Activated naive CD8-positive, alpha-beta T cell treated with anti-CD3 and anti-CD28 coated beads, Interleukin-2, amount 10 ng/mL, durations not matched to agents 7 days and 5 days (primary cell): ENCODE measurements at regions of chr20 and their contacts with region 1.

Region 1: GRCh38 chr20:53594068-53595017 is 704 bp upstream of the ZNF217 start:
- DNase-seq: peak; percentile 100
- ATAC-seq: peak; percentile 79
- H3K4me3 Mint-ChIP-seq: peak overlapping the region; percentile 97
- H3K27ac Mint-ChIP-seq: peak overlapping the region; percentile 95
- H3K4me1 Mint-ChIP-seq: peaks cover 45% of the 10 kb centered on the region
- H3K27me3 Mint-ChIP-seq: no peaks in the 10 kb centered on the region

Region 2: DNA sequence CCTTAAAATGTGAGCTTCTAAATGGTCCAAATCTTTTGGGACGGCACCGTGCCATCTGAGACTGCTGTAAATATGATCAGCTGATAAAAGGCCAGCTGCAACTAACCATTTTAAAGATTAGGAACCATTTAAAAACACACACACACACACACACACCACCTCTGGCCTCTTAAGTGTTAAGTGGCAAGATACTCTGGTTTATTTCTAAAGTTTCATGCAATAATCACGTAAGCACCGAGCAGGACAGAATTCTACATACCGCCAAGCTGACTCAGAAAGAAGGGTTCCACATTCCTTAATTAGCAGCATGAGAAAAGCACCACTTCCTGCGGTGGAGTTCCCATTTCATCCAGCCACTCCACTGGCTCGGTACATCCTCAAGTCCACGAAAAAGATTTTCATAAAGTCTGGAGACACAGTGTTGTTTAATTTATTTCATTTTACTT is 17.1 kb after region 1 on chr20:
- POLR2A ChIA-PET with region 1: interaction called, 58 read pairs
- DNase-seq: no peak
- ATAC-seq: no peak
- H3K4me3 Mint-ChIP-seq: no peak overlapping the region
- H3K27ac Mint-ChIP-seq: no peak overlapping the region
- H3K4me1 Mint-ChIP-seq: peaks cover 30% of the 10 kb centered on the region
- H3K27me3 Mint-ChIP-seq: no peaks in the 10 kb centered on the region

Region 3: DNA sequence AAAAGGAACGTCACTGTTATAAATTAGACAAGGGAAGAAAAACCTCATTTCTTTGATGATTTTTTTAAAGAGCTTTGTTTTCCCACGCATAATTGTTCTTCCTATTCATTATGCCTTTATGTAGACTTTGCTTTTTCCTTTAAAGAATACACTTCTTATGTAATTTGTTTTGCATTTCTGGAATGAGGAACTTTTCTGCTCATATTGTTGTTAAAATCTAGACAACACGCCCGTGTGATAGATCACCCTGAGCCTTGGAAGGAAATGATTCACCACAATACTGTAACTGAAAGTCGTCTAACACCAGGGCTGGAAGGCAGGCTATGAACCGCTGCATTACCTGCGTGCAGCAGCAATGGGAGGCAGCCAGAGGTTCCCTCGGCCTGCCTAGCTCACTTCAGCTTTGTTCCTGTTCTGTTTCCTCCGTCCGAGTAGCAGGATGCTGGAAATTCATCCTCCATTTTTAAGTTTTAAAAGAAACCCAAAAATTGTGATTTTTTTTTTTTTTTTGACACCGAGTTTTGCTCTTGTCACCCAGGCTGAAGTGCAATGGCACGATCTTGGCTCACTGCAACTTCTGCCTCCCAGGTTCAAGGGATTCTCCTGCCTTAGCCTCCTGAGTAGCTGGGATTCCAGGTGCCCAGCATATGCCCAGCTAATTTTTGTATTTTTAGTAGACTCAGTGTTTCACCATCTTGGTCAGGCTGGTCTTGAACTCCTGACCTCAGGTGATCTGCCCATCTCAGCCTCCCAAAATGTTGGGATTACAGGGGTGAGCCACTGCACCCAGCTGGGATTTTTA is 48.9 kb after region 1 on chr20:
- POLR2A ChIA-PET with region 1: interaction called, 31 read pairs
- DNase-seq: peak; percentile 60
- ATAC-seq: peak; percentile 96
- H3K4me3 Mint-ChIP-seq: peak overlapping the region; percentile 75
- H3K27ac Mint-ChIP-seq: peak overlapping the region; percentile 96
- H3K4me1 Mint-ChIP-seq: peaks cover 43% of the 10 kb centered on the region
- H3K27me3 Mint-ChIP-seq: no peaks in the 10 kb centered on the region

Region 4: DNA sequence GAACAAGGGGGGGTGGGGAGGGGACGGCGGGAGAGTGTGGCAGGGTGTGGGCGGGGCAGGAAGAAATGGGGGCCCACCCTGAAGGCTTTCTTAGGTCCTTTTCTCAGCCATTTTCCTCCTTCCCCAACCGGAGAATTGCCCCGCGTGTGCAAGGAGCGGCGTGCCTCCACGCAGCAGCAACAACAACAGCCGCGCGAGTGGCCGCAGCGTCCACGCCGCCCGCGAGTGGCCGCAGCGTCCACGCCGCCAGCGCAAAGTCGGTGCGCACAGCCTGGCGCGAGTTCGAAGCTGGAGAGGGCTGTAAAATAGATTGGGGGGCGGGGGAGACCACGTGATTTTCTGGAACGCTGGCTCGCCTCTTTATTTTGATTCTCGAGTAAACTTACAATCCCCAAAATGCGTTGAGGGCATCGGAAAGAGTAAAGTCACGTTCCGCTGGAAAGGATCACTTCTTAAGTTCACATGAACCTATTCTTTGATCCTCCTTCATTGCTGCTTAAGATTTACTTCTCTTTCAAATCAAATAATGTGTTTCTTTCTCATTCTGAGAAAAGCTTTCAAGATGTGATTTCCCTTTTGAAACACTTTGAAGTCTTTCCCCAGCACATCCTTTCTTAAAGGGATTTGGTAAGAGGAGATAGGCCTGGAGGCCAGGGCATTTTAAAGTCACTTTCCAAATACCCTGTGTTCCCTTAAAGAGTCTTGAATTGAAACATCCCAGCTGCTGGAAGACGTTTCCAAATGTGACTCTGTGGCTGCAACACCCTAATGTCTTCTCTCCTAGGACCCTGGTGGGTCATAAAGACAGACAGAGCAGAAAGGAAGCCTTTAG is 66.0 kb after region 1 on chr20:
- POLR2A ChIA-PET with region 1: interaction called, 11 read pairs
- DNase-seq: peak; percentile 69
- ATAC-seq: peak; percentile 51
- H3K4me3 Mint-ChIP-seq: peak overlapping the region; percentile 88
- H3K27ac Mint-ChIP-seq: peak overlapping the region; percentile 96
- H3K4me1 Mint-ChIP-seq: peaks cover 57% of the 10 kb centered on the region
- H3K27me3 Mint-ChIP-seq: no peaks in the 10 kb centered on the region

Region 5: GRCh38 chr20:53708129-53708968 is 114.0 kb after region 1 on chr20:
- POLR2A ChIA-PET with region 1: interaction called, 24 read pairs
- DNase-seq: no peak
- ATAC-seq: peak; percentile 60
- H3K4me3 Mint-ChIP-seq: peak overlapping the region; percentile 82
- H3K27ac Mint-ChIP-seq: peak overlapping the region; percentile 94
- H3K4me1 Mint-ChIP-seq: peaks cover 50% of the 10 kb centered on the region
- H3K27me3 Mint-ChIP-seq: no peaks in the 10 kb centered on the region

Region 6: DNA sequence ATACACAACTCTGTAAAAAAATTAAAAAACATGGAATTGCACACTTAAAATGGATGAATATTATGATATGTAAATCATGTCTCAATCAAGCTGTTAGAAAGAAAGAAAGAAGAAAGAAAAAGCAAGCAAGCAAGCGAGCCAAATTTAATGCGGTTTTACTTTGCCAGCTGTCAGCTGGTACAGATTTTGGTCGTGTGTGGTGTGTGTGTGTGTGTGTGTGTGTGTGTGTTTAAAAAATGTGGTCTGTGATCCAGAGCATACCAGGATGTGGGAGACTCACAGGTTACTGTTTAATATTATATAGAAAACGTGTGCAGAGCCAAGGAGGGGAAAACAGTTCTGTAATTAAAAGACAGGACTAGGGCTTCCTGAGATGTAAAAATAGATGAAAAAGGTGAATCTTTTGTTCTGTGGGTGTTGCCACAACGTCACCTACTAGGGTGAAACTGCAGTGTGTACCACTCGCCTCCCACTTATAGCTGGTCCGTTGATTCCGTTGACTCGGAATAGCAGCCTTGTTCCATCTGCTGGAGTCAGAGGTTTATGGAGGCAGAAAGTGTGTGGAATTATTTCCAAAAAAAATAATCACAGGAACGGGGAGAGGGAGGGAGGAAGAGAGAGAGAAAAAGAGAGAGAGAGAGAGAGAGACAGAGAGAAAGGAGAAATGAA is 278.4 kb after region 1 on chr20:
- POLR2A ChIA-PET with region 1: interaction called, 14 read pairs
- DNase-seq: no peak
- ATAC-seq: peak; percentile 54
- H3K4me3 Mint-ChIP-seq: peak overlapping the region; percentile 88
- H3K27ac Mint-ChIP-seq: peak overlapping the region; percentile 96
- H3K4me1 Mint-ChIP-seq: peaks cover 47% of the 10 kb centered on the region
- H3K27me3 Mint-ChIP-seq: no peaks in the 10 kb centered on the region